AG04450 (cell line): ENCODE measurements at regions of chr1 and their contacts with region 1.

Region 1: GRCh38 chr1:145706086-145706680 is 985 bp downstream of the PDZK1 start:
- DNase-seq: no peak
- H3K4me3 ChIP-seq: no peak overlapping the region
- H3K27ac ChIP-seq: no peak overlapping the region
- H3K27me3 ChIP-seq: no peaks in the 10 kb centered on the region
- CTCF ChIP-seq: no peak

Region 2: GRCh38 chr1:145690624-145691035 is 15.6 kb before region 1 on chr1:
- CTCF ChIA-PET with region 1: no interaction called
- POLR2A ChIA-PET with region 1: no interaction called
- DNase-seq: peak; percentile 41
- H3K4me3 ChIP-seq: no peak overlapping the region
- H3K27ac ChIP-seq: peak overlapping the region; percentile 73
- H3K27me3 ChIP-seq: no peaks in the 10 kb centered on the region
- CTCF ChIP-seq: no peak

Region 3: GRCh38 chr1:145720877-145721671 is 14.9 kb after region 1 on chr1:
- CTCF ChIA-PET with region 1: interaction called, 35 read pairs
- POLR2A ChIA-PET with region 1: no interaction called
- DNase-seq: peak; percentile 29
- H3K4me3 ChIP-seq: peak overlapping the region; percentile 36
- H3K27ac ChIP-seq: peak overlapping the region; percentile 84
- H3K27me3 ChIP-seq: no peaks in the 10 kb centered on the region
- CTCF ChIP-seq: peak; percentile 82

Region 4: DNA sequence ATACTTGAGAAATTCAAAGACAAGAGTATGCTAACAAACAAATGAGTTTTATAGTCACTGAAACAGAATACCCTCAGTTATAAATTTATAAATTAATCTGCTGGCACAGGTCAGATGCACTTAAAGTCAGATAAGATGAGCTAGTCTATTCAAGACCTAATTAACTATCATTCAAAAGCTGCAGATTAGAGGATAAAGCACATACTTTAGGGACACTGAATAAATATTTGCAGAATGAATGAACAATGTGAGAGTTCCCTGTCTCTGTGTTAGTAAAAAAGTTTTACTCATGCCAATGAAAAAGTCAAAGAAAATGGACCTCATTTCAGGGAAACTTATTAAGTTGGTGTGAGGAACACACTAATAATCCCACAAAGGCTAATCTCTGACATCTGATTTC is 59.4 kb after region 1 on chr1:
- CTCF ChIA-PET with region 1: no interaction called
- POLR2A ChIA-PET with region 1: no interaction called
- DNase-seq: no peak
- H3K4me3 ChIP-seq: no peak overlapping the region
- H3K27ac ChIP-seq: no peak overlapping the region
- H3K27me3 ChIP-seq: no peaks in the 10 kb centered on the region
- CTCF ChIP-seq: no peak

Region 5: GRCh38 chr1:145777357-145778145 is 71.4 kb after region 1 on chr1:
- CTCF ChIA-PET with region 1: no interaction called
- POLR2A ChIA-PET with region 1: no interaction called
- DNase-seq: no peak
- H3K4me3 ChIP-seq: no peak overlapping the region
- H3K27ac ChIP-seq: no peak overlapping the region
- H3K27me3 ChIP-seq: no peaks in the 10 kb centered on the region
- CTCF ChIP-seq: no peak